Gastrocnemius medialis (tissue), 4 donors: ENCODE measurements at regions of chr15 and their contacts with region 1.

Region 1: GRCh38 chr15:71114896-71115554 is at the start of gene THSD4:
- DNase-seq: peak; percentile 18 to 60
- ATAC-seq: peak; percentile 73 to 89
- H3K4me3 ChIP-seq: peak within 1 kb of the TSS; percentile 60 to 71 (median 64)
- H3K27ac ChIP-seq: peak within 1 kb of the TSS in 3 of 4 donors; percentile 65 to 79 (median 76)
- H3K4me1 ChIP-seq: peaks cover 10 to 13% of the 10 kb centered on the region in 2 donors
- H3K27me3 ChIP-seq: no peaks in the 10 kb centered on the region
- CTCF ChIP-seq: peak; percentile 93 to 99 (median 96)
- POLR2A ChIP-seq: no peak
- total RNA-seq, gene THSD4: 0.35 to 3.1 (median 0.60) TPM

Region 2: GRCh38 chr15:71201477-71201876 is 86.5 kb after region 1 on chr15:
- in situ Hi-C with region 1: no loop called
- intact Hi-C with region 1: loop called (anchors 10 kb)
- DNase-seq: no peak
- ATAC-seq: no peak
- H3K4me3 ChIP-seq: no peak overlapping the region
- H3K27ac ChIP-seq: no peak overlapping the region
- H3K4me1 ChIP-seq: peaks cover 0 to 6% of the 10 kb centered on the region in 2 donors
- H3K27me3 ChIP-seq: no peaks in the 10 kb centered on the region
- CTCF ChIP-seq: no peak
- POLR2A ChIP-seq: no peak